Activated naive CD4-positive, alpha-beta T cell treated with anti-CD3 and anti-CD28 coated beads, Interleukin-2, amount 10 ng/mL, durations not matched to agents 7 days and 5 days (primary cell): ENCODE measurements at regions of chr12 and their contacts with region 1.

Region 1: DNA sequence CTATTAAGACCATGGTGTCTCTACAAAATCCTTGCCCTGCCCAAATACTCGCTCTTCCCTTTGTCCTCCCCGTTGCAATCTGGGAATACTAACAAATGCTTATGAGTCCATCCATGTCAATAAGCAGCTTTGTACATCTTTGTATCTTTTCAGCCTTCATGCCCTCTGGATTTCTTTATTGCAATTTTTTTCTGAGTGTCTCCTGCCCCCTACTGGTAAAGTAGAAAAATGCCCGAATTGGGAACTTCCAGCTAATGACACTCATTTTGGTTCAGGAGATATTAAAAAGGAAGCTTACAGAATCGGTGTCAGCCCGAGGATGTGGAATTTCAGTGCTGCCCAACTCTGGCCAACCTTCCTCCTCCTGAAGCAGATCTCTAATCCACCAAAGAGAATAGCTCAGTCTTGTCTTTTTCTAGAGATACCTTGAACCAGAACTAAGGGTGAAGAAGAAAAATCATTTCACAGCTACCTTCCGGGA is 46.0 kb downstream of the SH2B3 start:
- DNase-seq: no peak
- H3K4me3 Mint-ChIP-seq: no peak overlapping the region
- H3K27ac Mint-ChIP-seq: no peak overlapping the region
- H3K4me1 Mint-ChIP-seq: peaks cover 40% of the 10 kb centered on the region
- H3K27me3 Mint-ChIP-seq: no peaks in the 10 kb centered on the region

Region 2: DNA sequence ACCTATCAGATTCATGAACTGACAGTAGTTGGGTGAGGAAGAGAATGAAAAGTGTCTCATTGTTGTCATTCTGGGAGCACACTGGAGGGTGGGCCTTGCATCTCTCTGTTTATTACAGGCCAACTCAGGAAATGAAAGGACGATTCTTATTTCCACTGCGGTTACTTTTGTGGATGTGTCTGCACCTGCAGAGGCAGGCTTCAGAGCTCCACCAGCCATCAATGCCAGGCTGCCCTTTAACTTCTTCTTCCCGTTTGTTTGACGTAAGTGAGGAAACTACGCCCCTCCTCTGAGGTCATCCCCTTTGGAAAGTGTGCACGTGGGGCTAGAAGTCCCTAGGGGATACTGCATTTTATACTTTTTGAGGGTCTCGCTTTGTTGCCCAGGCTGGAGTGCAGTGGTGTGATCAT is 804.1 kb before region 1 on chr12:
- CTCF ChIA-PET with region 1: no interaction called
- DNase-seq: peak; percentile 54
- H3K4me3 Mint-ChIP-seq: peak overlapping the region; percentile 15
- H3K27ac Mint-ChIP-seq: peak overlapping the region; percentile 87
- H3K4me1 Mint-ChIP-seq: peaks cover 37% of the 10 kb centered on the region
- H3K27me3 Mint-ChIP-seq: no peaks in the 10 kb centered on the region

Region 3: DNA sequence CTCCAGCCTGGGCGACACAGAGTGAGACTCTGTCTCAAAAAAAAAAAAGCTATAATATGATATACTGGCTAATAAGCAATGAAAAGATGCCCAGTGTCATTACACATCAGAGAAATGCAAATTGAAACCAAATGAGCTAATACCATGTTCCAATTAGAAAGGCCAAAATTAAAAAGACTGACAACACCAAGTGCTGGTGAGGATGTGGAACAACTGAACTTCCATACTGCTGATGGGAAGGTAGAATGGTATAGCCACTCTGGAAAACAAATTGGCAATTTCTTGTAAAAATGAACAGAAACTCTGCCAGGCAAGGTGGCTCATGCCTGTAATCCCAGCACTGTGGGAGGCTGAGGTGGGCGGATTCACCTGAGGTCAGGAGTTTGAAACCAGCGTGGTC is 74.2 kb before region 1 on chr12:
- CTCF ChIA-PET with region 1: no interaction called
- DNase-seq: no peak
- H3K4me3 Mint-ChIP-seq: no peak overlapping the region
- H3K27ac Mint-ChIP-seq: no peak overlapping the region
- H3K4me1 Mint-ChIP-seq: no peaks in the 10 kb centered on the region
- H3K27me3 Mint-ChIP-seq: peaks cover 20% of the 10 kb centered on the region

Region 4: DNA sequence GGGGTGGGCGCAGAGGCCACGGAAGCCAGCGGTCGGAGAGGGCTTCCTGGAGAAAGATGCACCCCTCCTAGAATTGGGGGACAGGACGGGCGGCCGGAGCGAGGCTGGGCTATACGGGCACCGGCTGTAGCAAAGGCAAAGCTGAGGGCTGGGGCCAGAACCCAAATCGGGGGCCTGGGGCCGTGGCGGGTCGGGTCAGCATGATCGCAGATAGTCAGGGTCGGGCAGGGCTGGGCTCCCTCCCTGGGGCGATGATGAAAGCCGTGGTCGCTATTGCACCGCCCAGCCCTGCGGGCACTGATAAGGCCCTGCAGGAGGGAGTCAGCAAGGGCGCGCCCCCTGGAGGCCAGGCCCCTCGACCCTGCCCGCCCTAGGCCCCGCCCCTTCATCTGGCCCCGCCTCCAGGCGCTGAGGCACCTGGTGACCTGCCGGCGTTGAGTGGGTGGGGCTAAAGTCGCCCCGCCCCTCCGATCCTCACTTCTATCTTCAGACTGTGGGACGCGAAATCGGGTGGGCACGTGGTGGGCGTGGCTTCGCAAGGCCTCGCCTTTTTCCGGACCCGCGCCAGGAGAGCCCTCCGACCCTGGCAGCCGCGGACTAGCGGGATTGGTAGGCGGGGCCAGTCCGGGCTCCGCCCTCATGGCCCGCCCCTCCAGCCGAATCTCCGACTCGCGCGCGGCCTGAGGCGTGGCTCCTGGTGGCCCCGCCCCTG is 46.4 kb before region 1 on chr12:
- CTCF ChIA-PET with region 1: interaction called, 757 read pairs
- DNase-seq: peak; percentile 100
- H3K4me3 Mint-ChIP-seq: peak overlapping the region; percentile 76
- H3K27ac Mint-ChIP-seq: peak overlapping the region; percentile 91
- H3K4me1 Mint-ChIP-seq: peaks cover 61% of the 10 kb centered on the region
- H3K27me3 Mint-ChIP-seq: peaks cover 4% of the 10 kb centered on the region

Region 5: DNA sequence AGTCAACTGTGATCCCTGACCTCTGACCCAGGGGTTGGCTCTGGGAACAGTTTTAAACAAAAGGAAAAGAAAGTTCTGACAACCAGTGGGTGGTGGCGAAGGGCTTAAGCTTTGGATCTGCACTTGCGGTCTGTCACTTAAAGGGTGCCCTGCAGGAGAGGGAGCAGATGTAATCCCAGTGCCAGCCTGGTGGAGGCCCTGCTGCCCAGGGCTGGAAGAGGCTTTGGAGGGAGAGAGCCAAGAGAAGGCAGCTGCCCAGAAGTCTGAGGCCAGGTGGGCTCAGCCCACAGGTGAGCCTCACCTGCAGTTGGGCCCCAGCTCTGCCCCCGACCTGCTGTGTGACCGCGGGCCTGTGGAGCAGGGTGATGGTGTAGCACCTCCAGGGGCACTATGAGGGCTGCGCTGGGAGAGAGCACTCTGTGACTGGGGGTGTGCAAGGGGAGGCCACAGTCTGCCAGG is 26.9 kb before region 1 on chr12:
- CTCF ChIA-PET with region 1: interaction called, 40 read pairs
- DNase-seq: no peak
- H3K4me3 Mint-ChIP-seq: no peak overlapping the region
- H3K27ac Mint-ChIP-seq: peak overlapping the region; percentile 89
- H3K4me1 Mint-ChIP-seq: peaks cover 72% of the 10 kb centered on the region
- H3K27me3 Mint-ChIP-seq: no peaks in the 10 kb centered on the region

Region 6: GRCh38 chr12:111434680-111435338 is 16.9 kb before region 1 on chr12:
- CTCF ChIA-PET with region 1: interaction called, 27 read pairs
- DNase-seq: peak; percentile 89
- H3K4me3 Mint-ChIP-seq: peak overlapping the region; percentile 75
- H3K27ac Mint-ChIP-seq: peak overlapping the region; percentile 100
- H3K4me1 Mint-ChIP-seq: peaks cover 92% of the 10 kb centered on the region
- H3K27me3 Mint-ChIP-seq: peaks cover 8% of the 10 kb centered on the region

Region 7: DNA sequence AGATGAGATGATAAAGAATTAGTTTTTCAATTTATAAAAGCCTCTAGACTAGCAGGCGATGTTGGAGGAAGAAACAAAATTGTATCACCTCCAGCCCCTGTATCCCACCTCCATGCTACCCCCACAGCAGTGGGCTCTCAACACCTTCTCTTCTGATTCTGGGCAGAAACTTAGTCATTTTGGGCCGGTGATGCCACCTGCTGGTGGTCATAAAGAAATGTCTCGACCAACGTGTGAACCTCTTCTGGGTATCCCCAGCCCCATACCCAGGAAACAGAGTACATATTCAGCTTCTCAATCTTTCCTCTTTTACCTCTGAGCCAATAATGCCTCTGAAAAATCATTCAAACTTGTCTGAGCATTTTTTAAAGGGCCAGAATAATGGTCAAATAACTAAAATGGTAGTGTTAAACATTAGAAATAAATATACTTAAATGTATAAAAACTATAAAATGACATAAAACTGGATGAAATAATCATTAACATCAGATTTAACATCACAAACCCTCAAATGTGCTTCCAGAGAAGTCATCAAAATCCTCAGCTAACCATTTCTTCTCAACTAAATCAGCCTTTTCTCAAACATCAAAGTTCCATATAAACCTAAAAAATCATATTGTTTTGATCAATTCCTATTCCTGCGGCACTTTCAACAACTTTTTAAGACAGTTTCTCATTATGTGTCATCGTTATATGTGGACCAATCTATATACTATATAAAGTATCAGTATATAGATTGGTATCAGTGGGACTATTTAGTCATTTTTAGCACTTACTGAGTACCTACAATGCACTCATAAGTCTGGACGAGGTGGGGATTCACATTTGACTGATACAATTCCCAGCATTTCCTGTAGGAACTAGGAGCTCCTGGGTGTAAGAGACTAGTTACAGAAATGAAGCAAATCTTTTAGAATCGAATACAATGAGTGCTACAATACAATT is 78.0 kb after region 1 on chr12:
- CTCF ChIA-PET with region 1: interaction called, 28 read pairs
- DNase-seq: peak; percentile 73
- H3K4me3 Mint-ChIP-seq: no peak overlapping the region
- H3K27ac Mint-ChIP-seq: no peak overlapping the region
- H3K4me1 Mint-ChIP-seq: no peaks in the 10 kb centered on the region
- H3K27me3 Mint-ChIP-seq: no peaks in the 10 kb centered on the region

Region 8: DNA sequence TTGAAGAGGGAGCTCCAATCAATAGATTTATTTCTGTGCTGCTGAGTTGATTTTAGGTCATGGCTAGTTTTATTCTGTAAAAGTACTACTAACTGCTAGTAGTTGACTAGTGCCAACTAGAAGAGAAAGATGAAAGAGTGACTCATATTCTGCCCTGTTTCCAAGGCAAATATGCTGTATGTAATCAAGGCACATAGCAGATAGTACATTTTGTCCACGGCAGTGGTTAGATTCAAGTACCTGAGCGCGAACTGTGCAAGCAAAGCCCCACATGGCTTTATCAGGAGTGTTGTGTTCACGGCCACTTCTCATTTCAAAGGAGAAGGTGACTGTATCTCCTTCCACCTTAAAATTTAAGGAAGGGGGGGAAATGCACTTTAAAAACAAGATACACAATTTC is 800.5 kb after region 1 on chr12:
- CTCF ChIA-PET with region 1: no interaction called
- DNase-seq: no peak
- H3K4me3 Mint-ChIP-seq: no peak overlapping the region
- H3K27ac Mint-ChIP-seq: no peak overlapping the region
- H3K4me1 Mint-ChIP-seq: no peaks in the 10 kb centered on the region
- H3K27me3 Mint-ChIP-seq: no peaks in the 10 kb centered on the region